ENCODE measurements at regions of chr6 and their contacts with region 1.

Region 1: DNA sequence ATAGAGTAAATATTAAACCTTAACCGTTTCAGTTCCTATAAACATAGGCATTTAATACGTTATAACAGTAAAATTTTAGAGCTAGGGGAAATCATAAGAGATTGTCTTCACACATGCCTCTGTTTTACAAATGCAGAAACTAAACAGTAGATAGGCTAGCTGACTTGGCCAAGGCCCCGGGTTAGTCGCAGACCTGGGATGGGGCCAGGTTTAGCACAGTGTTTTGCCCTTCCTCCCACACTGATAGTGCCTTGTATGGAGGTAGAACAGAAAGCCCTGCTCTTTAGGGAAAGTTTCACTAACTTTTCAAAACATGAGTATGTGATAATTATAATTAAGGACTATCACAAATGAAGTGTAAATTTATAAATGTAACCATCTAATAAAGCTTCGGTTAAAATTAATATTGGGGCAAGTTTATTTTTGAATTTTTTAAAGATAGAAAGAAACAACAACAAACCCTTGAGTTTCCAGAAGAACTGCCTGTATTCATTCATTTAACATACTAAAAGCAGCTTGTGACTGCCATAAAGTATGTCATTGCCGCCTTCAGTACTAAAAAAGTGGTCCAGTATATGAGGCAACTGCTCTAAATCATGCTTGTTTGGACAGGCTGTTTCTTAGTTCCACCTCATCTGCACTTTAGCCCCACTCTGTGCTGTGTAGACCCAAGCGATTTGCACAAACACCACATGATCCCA is 62.5 kb upstream of the LOC128125822 start:
- DNase-seq: peak; percentile 92
- H3K4me3 ChIP-seq: peak overlapping the region in 1 of 4 donors; percentile 17
- H3K27ac ChIP-seq: peak overlapping the region; percentile 62 to 83 (median 76)
- H3K4me1 ChIP-seq: peaks cover 0 to 15% (median 4%) of the 10 kb centered on the region in 4 donors
- H3K27me3 ChIP-seq: no peaks in the 10 kb centered on the region
- CTCF ChIP-seq: no peak
- EP300 ChIP-seq: peak; percentile 22 to 82 (median 64)
- POLR2A ChIP-seq: no peak

Region 2: GRCh38 chr6:63447134-63447533 is 62.7 kb before region 1 on chr6:
- intact Hi-C with region 1: loop called (anchors 2 kb)
- DNase-seq: no peak
- H3K4me3 ChIP-seq: no peak overlapping the region
- H3K27ac ChIP-seq: peak overlapping the region in 3 of 4 donors; percentile 51 to 71 (median 56)
- H3K4me1 ChIP-seq: peaks cover 0 to 23% (median 14%) of the 10 kb centered on the region in 4 donors
- H3K27me3 ChIP-seq: no peaks in the 10 kb centered on the region
- CTCF ChIP-seq: no peak
- EP300 ChIP-seq: peak; percentile 18 to 75 (median 58)
- POLR2A ChIP-seq: no peak

Region 3: DNA sequence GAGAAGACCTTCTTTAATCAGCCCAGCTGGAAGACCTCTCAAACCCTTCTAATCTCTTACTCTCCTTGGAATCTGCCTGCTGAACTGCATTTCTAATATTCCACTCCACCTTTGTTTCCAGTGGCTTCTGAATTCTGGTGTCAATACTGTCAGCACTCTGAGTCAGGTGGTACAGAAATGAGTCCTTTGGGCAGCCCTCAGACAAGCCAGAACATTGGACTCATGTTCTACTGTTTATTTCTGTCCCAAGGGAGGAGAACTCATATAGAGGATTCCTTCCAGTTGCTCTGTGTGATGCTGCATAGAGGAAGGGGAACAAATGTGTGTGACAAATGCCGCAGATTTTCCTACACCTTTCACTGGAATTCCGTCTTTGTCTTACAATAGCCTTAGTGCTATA is 240.6 kb after region 1 on chr6:
- intact Hi-C with region 1: no loop called
- DNase-seq: no peak
- H3K4me3 ChIP-seq: no peak overlapping the region
- H3K27ac ChIP-seq: no peak overlapping the region
- H3K4me1 ChIP-seq: no peaks in the 10 kb centered on the region
- H3K27me3 ChIP-seq: no peaks in the 10 kb centered on the region
- CTCF ChIP-seq: no peak
- EP300 ChIP-seq: no peak
- POLR2A ChIP-seq: no peak

Region 4: DNA sequence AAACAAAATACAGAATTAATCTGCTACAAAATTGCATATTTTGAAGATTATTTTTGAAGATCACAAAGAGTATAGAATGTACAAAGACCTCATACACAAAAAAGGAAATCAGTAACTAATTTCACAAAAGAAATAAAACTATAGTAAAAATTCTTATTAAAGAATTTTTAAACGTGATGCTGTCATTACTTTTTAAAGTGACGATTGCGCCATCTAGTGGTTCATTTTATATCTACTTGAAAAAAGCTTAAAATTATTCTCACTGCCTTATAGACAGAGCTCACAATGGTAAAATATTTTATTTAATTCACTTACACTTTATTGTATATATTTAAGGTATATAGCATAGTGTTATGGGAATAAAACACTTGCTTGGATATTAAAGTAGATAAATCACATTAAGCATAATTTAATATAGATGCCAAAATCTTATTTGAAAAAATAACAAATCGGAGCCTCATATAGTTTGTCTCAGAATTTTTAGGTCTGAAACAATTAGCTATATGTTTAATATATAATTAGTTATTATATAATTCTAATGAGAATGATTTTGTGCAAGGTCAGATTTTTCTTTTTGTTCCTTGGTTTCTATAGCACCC is 254.6 kb after region 1 on chr6:
- intact Hi-C with region 1: no loop called
- DNase-seq: no peak
- H3K4me3 ChIP-seq: no peak overlapping the region
- H3K27ac ChIP-seq: no peak overlapping the region
- H3K4me1 ChIP-seq: no peaks in the 10 kb centered on the region
- H3K27me3 ChIP-seq: no peaks in the 10 kb centered on the region
- CTCF ChIP-seq: peak in 2 of 4 experiments; percentile 40 to 71
- EP300 ChIP-seq: no peak
- POLR2A ChIP-seq: no peak